MCF 10A (cell line): ENCODE measurements at regions of chr7 and their contacts with region 1.

Region 1: DNA sequence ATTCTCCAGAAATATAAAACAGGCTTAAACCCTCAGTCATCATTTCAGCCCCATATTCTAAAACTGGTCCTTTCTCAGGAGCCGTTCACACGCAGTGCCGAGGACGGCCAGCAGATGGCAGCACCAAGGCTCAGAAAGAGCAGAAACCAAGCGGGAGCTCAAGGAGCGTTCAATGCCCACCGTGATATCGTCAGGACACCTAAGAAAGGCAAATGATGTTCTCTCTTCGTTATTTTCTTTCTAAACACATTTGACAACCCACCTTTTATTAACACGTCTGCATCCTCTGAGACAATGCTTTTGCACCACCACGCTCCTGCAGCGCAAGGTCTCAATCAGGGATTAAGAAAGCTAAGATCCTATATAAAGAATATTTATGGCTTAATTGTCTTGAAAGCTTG is 45.7 kb upstream of the RBM33 start:
- DNase-seq: peak; percentile 73
- H3K4me3 Mint-ChIP-seq: no peak overlapping the region
- H3K27ac Mint-ChIP-seq: no peak overlapping the region
- H3K4me1 Mint-ChIP-seq: peaks cover 19% of the 10 kb centered on the region
- H3K27me3 Mint-ChIP-seq: peaks cover 37% of the 10 kb centered on the region
- CTCF ChIP-seq: peak; percentile 93

Region 2: DNA sequence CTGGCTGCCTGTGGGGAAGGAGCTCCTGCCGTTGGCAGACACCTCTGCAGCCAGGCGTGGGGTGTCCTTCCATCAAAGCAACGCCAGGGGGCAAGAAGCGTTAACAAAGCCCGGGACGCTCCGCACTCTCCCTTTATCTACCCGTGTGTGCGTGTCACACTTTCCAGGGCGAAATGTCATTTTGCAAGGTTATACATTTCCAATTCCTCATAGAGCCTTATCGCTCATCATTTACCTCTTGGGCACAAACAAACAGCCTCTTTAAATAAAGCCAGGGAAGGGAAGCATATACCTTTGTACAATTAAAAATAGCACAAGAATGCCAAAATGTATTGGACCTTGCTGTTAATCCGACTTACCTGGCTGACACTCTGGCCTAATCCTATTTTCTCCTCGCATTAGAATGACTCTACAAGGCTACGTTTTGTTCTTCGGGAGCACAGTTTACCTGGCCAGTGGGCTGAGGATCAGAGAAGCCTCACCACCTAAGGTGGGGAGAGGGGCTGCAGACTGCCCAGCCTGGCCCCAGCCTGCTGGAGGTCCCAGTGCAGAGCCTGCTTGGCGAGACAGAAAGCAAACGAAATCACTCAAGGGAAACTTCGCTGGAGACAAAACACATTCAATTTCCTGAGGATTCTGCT is 218.5 kb before region 1 on chr7:
- CTCF ChIA-PET with region 1: interaction called, 9 read pairs
- POLR2A ChIA-PET with region 1: no interaction called
- intact Hi-C with region 1: loop called (anchors 10 kb)
- DNase-seq: peak; percentile 78
- H3K4me3 Mint-ChIP-seq: no peak overlapping the region
- H3K27ac Mint-ChIP-seq: no peak overlapping the region
- H3K4me1 Mint-ChIP-seq: peaks cover 8% of the 10 kb centered on the region
- H3K27me3 Mint-ChIP-seq: peaks cover 84% of the 10 kb centered on the region
- CTCF ChIP-seq: peak; percentile 61

Region 3: GRCh38 chr7:155619634-155620271 is 20.9 kb after region 1 on chr7:
- CTCF ChIA-PET with region 1: interaction called, 24 read pairs
- POLR2A ChIA-PET with region 1: no interaction called
- intact Hi-C with region 1: no loop called
- DNase-seq: no peak
- H3K4me3 Mint-ChIP-seq: no peak overlapping the region
- H3K27ac Mint-ChIP-seq: no peak overlapping the region
- H3K4me1 Mint-ChIP-seq: no peaks in the 10 kb centered on the region
- H3K27me3 Mint-ChIP-seq: peaks cover 39% of the 10 kb centered on the region
- CTCF ChIP-seq: no peak

Region 4: GRCh38 chr7:155702616-155703015 is 103.8 kb after region 1 on chr7:
- CTCF ChIA-PET with region 1: interaction called, 15 read pairs
- POLR2A ChIA-PET with region 1: interaction called, 3 read pairs
- intact Hi-C with region 1: no loop called
- DNase-seq: peak; percentile 57
- H3K4me3 Mint-ChIP-seq: no peak overlapping the region
- H3K27ac Mint-ChIP-seq: no peak overlapping the region
- H3K4me1 Mint-ChIP-seq: peaks cover 11% of the 10 kb centered on the region
- H3K27me3 Mint-ChIP-seq: no peaks in the 10 kb centered on the region
- CTCF ChIP-seq: no peak

Region 5: DNA sequence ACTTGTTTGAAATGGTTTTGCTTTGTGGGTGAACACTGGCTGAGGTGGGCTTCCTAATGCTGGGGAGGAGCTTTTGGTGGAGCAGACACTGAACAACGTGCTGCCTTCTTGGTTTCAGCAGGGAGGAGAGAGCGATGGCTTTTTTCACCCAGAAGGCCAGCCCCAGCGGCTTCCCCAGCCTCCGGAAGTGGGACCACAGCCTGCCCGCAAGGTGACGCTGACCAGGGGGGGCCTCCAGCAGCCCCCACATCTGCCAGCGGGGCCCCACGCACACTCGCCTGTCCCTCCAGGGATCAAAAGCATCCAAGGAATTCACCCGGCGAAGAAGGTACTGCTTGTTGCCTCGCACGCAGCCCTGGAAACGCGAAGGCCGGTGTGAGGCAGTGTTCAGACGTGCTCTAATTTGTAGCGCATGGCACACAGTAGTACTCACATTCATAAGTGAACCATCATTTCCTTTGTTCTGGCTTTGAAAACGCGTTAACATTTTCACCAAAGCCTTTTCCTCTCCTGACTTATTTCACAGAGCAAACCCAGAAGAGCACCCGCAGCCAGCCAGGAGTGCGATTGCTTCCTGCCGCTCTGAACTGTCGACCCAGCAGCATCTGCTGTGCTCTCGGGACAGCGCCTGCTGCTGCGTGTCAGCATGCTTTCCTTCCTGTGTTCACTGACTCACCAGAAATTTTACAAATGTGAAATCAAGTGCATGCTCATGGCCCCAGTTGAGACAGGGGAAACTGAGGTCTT is 165.1 kb after region 1 on chr7:
- CTCF ChIA-PET with region 1: interaction called, 34 read pairs
- POLR2A ChIA-PET with region 1: interaction called, 4 read pairs
- intact Hi-C with region 1: loop called (anchors 1 kb)
- DNase-seq: no peak
- H3K4me3 Mint-ChIP-seq: no peak overlapping the region
- H3K27ac Mint-ChIP-seq: no peak overlapping the region
- H3K4me1 Mint-ChIP-seq: no peaks in the 10 kb centered on the region
- H3K27me3 Mint-ChIP-seq: no peaks in the 10 kb centered on the region
- CTCF ChIP-seq: no peak

Region 6: DNA sequence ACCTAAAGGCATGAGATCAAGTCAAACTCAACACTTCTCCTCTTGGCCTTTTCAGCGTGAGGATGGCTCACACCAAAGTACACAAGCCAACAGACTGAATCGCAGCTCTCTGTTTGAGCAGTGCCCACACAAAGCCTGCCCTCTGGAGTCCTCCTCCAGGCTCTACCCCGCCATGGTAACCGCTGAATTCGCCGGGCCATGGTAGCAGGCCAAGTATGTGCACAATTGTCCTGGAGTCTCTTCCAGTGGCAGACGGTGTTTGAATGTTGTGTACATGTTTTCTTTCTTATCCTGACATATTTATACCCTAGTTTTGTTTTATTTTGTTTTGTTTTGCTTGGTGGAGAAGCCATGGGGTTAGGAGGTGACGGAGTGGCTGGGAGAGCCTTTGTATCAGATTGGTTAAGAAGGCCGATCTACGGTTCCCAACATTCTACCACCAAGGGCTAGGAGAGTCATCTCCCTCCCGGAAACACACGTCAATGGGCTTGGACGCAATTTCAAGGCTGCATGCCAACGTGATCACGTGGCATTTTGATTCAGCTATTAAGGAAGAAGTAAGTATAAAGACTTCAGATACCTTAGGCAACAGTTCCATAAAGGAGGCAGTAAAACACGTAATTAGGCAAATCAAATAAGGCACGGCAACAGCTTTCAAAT is 225.5 kb after region 1 on chr7:
- CTCF ChIA-PET with region 1: no interaction called
- POLR2A ChIA-PET with region 1: no interaction called
- intact Hi-C with region 1: no loop called
- DNase-seq: peak; percentile 95
- H3K4me3 Mint-ChIP-seq: no peak overlapping the region
- H3K27ac Mint-ChIP-seq: no peak overlapping the region
- H3K4me1 Mint-ChIP-seq: peaks cover 15% of the 10 kb centered on the region
- H3K27me3 Mint-ChIP-seq: no peaks in the 10 kb centered on the region
- CTCF ChIP-seq: no peak

Region 7: DNA sequence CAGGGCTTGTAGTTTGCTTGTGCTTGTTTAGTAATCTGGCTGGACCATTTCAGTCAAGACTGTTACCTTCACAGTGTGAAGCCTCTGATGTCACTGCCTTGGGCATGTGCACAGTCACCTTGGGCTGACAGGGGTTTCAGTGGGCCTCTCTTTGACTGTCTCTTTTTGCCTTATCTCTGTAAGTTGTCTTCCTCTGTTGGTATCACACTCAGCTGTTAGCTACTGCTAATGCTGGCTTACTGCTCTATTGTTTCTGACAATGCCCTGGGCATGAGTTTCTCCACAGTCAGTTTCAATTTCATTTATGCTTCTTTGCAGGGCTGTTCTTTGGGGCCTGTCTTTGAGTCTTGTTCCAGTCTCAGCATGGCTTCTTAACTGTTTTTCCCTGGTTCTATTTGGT is 415.4 kb after region 1 on chr7:
- CTCF ChIA-PET with region 1: no interaction called
- POLR2A ChIA-PET with region 1: no interaction called
- intact Hi-C with region 1: no loop called
- DNase-seq: no peak
- H3K4me3 Mint-ChIP-seq: no peak overlapping the region
- H3K27ac Mint-ChIP-seq: no peak overlapping the region
- H3K4me1 Mint-ChIP-seq: no peaks in the 10 kb centered on the region
- H3K27me3 Mint-ChIP-seq: peaks cover 21% of the 10 kb centered on the region
- CTCF ChIP-seq: no peak